Heart left ventricle (tissue), 16 donors: ENCODE measurements at regions of chr1 and their contacts with region 1.

Region 1: DNA sequence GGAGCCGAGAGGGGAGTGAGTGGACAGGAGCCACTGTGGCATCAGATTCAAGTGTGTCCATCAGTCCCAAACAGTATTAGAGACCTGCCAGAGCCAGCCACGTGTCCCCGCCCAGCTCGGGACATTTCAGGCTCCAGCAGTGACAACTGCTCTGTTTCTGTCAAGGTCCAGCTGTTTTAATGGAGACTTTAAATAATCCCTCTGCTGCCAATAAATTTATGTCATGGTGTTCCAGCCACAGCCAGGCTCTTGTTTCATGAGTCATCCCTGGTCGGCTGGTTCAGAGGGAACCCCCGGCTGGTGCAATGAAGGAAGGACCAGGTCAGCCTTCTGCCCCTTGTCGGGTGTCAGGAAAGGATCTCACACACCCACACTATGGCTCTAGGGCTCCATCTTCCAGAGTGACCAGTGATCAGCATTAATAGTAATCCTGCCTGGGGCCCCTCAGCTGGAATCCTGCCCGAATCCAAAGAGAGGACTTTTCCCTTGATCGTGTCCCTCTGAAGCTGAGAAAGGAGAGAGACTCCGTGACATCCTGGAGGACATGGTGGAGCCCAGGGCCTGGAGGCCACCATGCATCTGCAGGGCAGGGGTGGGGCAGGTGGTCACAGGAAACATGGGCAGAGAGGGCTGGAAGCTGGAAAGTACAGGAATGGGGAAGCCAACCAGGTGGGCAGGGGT is 197.3 kb downstream of the MATN1 start:
- DNase-seq: peak in 4 of 5 donors; percentile 28 to 83 (median 42)
- ATAC-seq: peak in 3 of 4 donors; percentile 5 to 30 (median 25)
- H3K4me3 ChIP-seq: no peak overlapping the region
- H3K27ac ChIP-seq: peak overlapping the region; percentile 51 to 98 (median 83)
- H3K4me1 ChIP-seq: peaks cover 0 to 62% (median 26%) of the 10 kb centered on the region in 12 donors
- H3K27me3 ChIP-seq: peaks cover 0 to 12% (median 0%) of the 10 kb centered on the region in 9 donors
- CTCF ChIP-seq: no peak
- POLR2A ChIP-seq: no peak

Region 2: GRCh38 chr1:30478799-30479563 is 47.1 kb before region 1 on chr1:
- intact Hi-C with region 1: no loop called
- DNase-seq: no peak
- ATAC-seq: no peak
- H3K4me3 ChIP-seq: no peak overlapping the region
- H3K27ac ChIP-seq: no peak overlapping the region
- H3K4me1 ChIP-seq: no peaks in the 10 kb centered on the region
- H3K27me3 ChIP-seq: peaks cover 0 to 4% (median 0%) of the 10 kb centered on the region in 9 donors
- CTCF ChIP-seq: no peak
- POLR2A ChIP-seq: no peak

Region 3: GRCh38 chr1:30562559-30562958 is 36.4 kb after region 1 on chr1:
- intact Hi-C with region 1: loop called in 1 of 10 experiments (anchors 2 kb)
- DNase-seq: no peak
- ATAC-seq: peak in 3 of 4 donors; percentile 37 to 45 (median 38)
- H3K4me3 ChIP-seq: no peak overlapping the region
- H3K27ac ChIP-seq: no peak overlapping the region
- H3K4me1 ChIP-seq: no peaks in the 10 kb centered on the region
- H3K27me3 ChIP-seq: no peaks in the 10 kb centered on the region
- CTCF ChIP-seq: no peak
- POLR2A ChIP-seq: no peak

Region 4: DNA sequence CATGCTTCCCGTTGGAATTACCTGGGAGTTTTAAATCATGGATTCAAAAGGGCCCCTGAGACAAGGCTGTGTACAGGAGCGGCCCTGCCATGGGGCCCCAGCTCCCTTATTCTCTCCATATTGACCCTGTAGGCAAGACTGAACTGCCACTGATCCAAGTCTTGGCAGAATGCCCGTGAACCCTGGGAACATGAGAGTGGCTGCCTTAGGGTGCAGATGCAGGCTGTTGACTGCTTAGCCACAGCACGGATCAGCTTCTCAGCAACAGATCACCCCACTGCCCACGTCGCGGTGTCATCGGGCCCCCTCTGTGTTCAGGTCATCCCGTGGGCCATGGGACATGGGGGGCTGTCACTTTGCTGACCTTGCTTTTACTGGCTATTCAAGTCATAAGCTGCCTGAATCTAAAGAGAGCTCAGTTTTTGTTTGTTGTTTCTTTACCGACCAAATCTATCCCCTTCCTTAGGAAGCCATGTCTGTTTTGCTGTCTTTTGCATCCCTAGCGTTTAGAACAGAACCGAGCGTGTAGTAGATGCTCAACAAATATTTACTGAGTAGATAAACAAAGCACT is 113.9 kb after region 1 on chr1:
- intact Hi-C with region 1: loop called in 1 of 10 experiments (anchors 2 kb)
- DNase-seq: no peak
- ATAC-seq: no peak
- H3K4me3 ChIP-seq: no peak overlapping the region
- H3K27ac ChIP-seq: no peak overlapping the region
- H3K4me1 ChIP-seq: peaks cover 0 to 7% (median 0%) of the 10 kb centered on the region in 12 donors
- H3K27me3 ChIP-seq: peaks cover 0 to 18% (median 0%) of the 10 kb centered on the region in 9 donors
- CTCF ChIP-seq: no peak
- POLR2A ChIP-seq: no peak

Region 5: DNA sequence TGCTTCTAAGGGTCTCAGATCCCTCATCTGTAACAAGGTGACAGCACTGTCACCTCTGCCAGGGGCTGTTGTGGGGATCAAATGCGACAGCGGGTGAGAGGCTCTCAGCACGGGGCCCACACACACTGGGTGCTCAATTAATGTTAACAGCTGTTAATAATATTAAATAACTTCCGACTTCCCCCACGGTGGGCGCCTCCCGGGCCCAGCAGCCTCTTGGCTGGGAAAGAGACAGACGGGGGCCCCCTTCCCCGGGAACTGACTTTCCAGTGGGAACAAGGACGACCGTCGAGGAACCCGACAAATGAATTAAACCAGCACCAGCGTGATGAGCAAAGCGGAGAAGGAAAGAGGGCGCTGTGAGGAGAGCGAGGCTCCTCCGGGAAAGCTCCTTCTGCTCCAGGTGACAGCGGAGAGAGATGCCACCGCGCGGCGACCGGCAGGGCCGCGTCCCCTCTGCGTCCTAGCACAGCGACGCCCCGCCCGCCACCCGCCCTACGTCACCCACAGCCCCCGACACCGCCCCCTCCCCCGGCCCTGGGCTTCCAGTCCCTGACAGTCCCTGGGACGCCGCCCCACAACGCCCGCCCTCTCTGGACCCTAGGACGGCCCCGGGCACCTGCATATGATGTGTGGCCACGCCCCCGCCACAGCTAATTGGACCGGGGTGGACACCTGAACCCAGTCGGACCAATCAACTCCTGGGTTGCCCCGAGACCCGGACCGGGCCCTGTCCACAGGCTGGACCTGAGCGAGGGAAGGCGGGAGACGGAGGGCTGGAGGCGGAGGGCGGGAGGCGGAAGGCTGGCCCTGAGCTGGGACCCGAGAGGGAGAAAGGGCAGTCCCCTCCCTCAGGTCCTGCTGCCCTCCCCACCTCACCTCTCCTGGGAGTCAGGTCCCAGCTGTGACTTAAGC is 159.0 kb after region 1 on chr1:
- intact Hi-C with region 1: loop called in 1 of 10 experiments (anchors 5 kb)
- DNase-seq: peak in 4 of 5 donors; percentile 32 to 64 (median 60)
- ATAC-seq: peak in 3 of 4 donors; percentile 58 to 87 (median 68)
- H3K4me3 ChIP-seq: peak overlapping the region in 3 of 12 donors; percentile 20 to 23 (median 22)
- H3K27ac ChIP-seq: peak overlapping the region in 1 of 12 donors; percentile 17
- H3K4me1 ChIP-seq: peaks cover 0 to 15% (median 0%) of the 10 kb centered on the region in 12 donors
- H3K27me3 ChIP-seq: peaks cover 10 to 62% (median 19%) of the 10 kb centered on the region in 9 donors
- CTCF ChIP-seq: peak in 3 of 12 donors; percentile 9 to 21 (median 13)
- POLR2A ChIP-seq: no peak